Body of pancreas (tissue), 4 donors: ENCODE measurements at regions of chr5 and their contacts with region 1.

Region 1: DNA sequence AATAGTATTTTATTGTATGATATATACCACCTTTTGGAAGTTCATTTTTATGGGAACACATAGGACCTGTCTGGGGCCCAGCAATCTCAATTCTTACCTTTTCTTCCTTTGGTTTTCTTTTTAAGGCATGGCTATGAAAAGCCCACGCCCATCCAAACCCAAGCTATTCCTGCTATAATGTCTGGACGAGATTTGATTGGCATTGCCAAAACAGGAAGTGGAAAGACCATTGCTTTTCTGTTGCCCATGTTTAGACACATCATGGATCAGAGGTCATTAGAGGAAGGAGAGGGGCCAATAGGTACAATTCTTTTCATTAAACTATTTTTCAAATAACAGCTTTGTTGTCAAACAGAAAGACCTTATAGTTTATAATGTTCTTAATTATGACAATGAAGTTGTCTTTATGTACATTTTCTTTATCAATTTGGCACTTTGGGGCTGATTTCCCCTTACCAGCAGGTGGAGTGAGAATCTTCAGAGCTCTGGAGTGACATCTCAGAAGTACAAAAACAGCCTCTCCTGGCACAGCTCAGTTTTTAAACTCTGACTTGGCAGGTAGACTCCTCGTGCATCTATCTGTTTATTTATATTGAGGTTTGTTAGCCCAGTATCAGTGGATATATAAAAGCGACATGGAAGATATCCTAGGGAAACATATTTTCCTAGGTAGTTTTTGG is 25.8 kb downstream of the DDX46 start:
- DNase-seq: no peak
- ATAC-seq: no peak
- H3K4me3 ChIP-seq: no peak overlapping the region
- H3K27ac ChIP-seq: no peak overlapping the region
- H3K4me1 ChIP-seq: peaks cover 8% of the 10 kb centered on the region
- H3K27me3 ChIP-seq: no peaks in the 10 kb centered on the region
- CTCF ChIP-seq: no peak
- POLR2A ChIP-seq: no peak

Region 2: GRCh38 chr5:134692722-134693121 is 91.7 kb before region 1 on chr5:
- intact Hi-C with region 1: loop called (anchors 10 kb)
- DNase-seq: no peak
- ATAC-seq: no peak
- H3K4me3 ChIP-seq: no peak overlapping the region
- H3K27ac ChIP-seq: no peak overlapping the region
- H3K4me1 ChIP-seq: no peaks in the 10 kb centered on the region
- H3K27me3 ChIP-seq: no peaks in the 10 kb centered on the region
- CTCF ChIP-seq: no peak
- POLR2A ChIP-seq: no peak